ENCODE measurements at regions of chr11 and their contacts with region 1.

Region 1: DNA sequence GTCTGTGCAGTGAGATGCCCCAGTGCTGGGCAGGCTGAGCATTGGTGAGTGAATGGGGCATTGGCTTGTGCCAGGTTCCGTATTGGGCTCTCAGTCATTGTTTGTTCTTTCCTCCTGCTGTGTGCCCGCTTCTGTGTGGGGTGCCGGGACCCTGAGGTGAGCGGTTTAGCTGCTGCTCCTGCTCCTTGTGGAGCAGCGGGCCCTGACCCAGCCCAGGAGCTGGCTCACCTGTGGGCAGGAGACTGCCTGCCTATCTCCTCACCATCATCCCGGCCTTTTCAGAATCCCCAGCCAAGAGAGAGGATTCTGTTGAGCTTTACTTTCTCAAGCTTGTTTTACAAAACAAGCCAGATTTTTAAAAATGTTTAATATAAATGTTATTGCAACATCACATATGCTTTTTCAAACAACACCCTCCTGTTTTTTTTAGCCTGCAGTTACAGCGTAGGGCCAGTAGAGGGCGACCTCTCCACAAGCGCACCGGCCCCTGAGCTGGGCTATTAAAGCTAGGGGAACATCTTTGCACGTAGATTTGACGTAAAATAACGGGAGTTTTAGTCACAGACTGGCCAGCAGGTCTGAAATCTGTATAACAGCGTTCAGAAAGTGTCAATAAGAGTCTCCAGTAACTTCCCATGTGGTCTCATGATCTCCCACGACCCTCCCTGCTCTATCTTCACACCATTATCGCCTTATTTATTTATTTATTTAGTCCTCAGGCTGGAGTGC is 25.1 kb upstream of the RELT start:
- DNase-seq: peak; percentile 55 to 88
- ATAC-seq: peak; percentile 94 to 98 (median 95)
- H3K4me3 ChIP-seq: no peak overlapping the region
- H3K4me3 Mint-ChIP-seq: no peak overlapping the region
- H3K27ac ChIP-seq: no peak overlapping the region
- H3K27ac Mint-ChIP-seq: peak overlapping the region; percentile 53 to 54
- H3K4me1 ChIP-seq: no peaks in the 10 kb centered on the region
- H3K4me1 Mint-ChIP-seq: peaks cover 0 to 5% of the 10 kb centered on the region in 2 donors
- H3K27me3 ChIP-seq: no peaks in the 10 kb centered on the region
- H3K27me3 Mint-ChIP-seq: peaks cover 0 to 3% of the 10 kb centered on the region in 2 donors
- CTCF ChIP-seq: peak; percentile 98

Region 2: DNA sequence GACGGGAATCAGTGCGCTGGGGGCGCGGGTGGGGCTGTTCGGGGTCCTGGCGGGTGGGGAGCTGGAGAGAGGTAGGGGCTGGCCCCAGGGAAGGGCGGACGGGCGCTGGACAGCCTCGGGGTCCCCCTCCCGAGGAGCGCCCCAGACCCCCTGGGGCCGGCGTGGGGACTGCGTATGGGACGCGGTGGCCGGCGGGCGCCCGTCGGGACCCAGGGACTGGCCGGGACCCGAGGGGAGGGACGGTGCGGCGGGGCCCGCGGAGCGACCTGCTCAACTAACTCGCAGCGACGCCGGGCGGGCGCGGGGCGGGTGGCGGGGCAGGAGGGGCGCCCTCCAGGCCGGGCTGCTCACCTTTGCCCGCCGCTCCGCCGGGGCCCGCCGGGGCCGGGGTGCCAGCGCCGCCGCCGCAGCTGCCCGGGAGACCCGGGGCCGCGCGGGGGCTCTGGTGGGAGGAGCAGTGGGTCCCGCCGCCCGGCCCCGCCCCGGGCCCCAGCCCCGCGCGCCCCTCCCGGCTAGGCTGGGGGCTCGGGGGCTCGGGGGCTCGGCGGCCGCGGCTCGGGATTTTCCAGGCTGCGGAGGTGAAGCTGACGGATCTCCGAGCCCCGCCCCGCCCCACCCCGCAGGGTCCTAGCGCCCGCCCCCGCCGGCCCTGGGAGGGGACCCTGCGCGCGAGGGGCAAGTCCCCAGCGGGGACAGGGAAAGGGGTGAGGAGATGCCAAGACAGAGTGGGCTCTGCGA is 569.6 kb before region 1 on chr11:
- intact Hi-C with region 1: no loop called
- DNase-seq: peak; percentile 53 to 83
- ATAC-seq: peak; percentile 83 to 88 (median 84)
- H3K4me3 ChIP-seq: peak overlapping the region; percentile 20
- H3K4me3 Mint-ChIP-seq: peak overlapping the region; percentile 83
- H3K27ac ChIP-seq: no peak overlapping the region
- H3K27ac Mint-ChIP-seq: peak overlapping the region in 1 of 2 donors; percentile 83
- H3K4me1 ChIP-seq: peaks cover 45% of the 10 kb centered on the region
- H3K4me1 Mint-ChIP-seq: peaks cover 26 to 27% of the 10 kb centered on the region in 2 donors
- H3K27me3 ChIP-seq: no peaks in the 10 kb centered on the region
- H3K27me3 Mint-ChIP-seq: peaks cover 0 to 7% of the 10 kb centered on the region in 2 donors
- CTCF ChIP-seq: no peak

Region 3: DNA sequence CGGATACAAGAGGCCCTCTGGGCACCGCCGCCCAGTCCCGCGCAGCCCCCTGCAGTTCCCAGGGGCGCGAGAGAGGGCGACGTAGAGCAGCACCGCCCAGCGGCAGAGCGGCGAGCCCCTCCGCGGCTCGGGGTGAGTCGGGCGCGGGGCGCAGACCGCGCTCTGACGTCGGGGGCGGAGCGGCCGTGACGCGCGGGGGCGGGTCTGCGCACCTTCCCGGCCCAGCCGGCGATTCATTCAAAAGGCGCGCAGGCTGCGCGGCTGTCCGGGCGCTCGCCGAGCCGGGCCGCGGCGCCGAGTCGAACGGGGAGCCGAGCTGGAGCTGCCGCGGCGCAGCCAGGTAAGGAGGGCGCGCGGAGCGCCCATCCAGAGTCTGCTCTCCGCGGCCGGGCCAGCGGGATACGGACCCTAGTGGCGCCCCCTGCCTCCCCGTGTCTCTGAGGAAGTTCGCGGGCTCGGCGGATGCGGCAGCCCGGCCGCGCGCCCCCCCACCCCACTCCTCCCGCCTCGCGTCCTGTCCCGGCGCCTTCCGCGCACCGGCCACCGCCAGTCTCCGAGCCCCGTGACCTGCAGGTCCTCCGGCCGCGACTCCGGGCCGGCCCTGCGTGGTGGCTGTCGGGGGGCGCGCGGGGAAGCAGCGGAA is 25.2 kb after region 1 on chr11 and contains the start of gene RELT:
- intact Hi-C with region 1: loop called (anchors 2 kb)
- DNase-seq: peak; percentile 96 to 97
- ATAC-seq: peak; percentile 76 to 90 (median 76)
- H3K4me3 ChIP-seq: peak within 1 kb of the TSS; percentile 69
- H3K4me3 Mint-ChIP-seq: peak within 1 kb of the TSS; percentile 91
- H3K27ac ChIP-seq: peak within 1 kb of the TSS; percentile 89
- H3K27ac Mint-ChIP-seq: peak within 1 kb of the TSS; percentile 91 to 95
- H3K4me1 ChIP-seq: peaks cover 61% of the 10 kb centered on the region
- H3K4me1 Mint-ChIP-seq: peaks cover 14 to 45% of the 10 kb centered on the region in 2 donors
- H3K27me3 ChIP-seq: no peaks in the 10 kb centered on the region
- H3K27me3 Mint-ChIP-seq: no peaks in the 10 kb centered on the region
- CTCF ChIP-seq: peak; percentile 94
- total RNA-seq, gene RELT: 132 to 264 (median 151) TPM

Region 4: DNA sequence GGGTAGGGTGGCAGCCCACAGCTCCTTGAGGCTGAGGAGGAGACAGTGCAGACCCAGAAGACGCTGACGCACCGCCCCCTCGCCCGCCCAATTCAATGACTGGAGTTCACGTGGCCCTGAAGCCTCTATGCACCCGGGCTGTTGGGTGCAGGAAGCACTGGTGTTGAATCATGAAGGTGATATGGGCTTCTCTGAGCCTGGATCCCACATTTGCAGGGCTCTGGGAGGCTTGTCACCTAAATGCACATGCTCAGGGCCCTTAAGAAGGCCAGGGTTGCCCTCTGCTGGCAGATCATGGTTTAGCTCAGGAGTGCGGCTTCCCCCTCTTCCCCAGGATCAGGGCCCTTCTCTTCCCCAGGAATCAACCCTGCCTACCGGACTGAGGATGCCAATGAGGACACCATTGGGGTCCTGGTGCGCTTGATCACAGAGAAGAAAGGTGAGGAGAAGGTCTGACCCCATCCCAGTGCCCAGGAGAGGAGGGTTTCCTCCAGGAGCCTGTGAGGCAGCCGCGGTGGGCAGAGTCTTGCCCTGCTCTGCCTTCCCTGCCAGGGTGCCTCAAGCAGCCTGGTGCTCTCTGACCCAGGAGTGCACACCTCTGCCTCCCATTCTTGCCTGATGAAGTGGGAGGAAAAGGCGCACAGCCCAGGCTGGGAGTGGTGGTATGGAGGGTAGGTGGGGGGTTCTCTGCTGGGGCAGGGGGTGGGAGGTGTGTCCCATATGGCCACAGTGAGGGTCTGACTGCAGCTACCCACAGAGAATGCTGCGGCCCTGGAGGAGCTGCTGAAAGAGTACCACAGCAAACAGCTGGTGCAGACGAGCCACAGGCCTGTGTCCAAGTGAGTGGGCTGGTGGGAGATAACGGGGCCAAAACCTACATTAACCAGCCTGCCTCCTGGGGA is 42.7 kb after region 1 on chr11:
- intact Hi-C with region 1: loop called (anchors 1 kb)
- DNase-seq: peak; percentile 64 to 82
- ATAC-seq: peak; percentile 46 to 71 (median 55)
- H3K4me3 ChIP-seq: no peak overlapping the region
- H3K4me3 Mint-ChIP-seq: no peak overlapping the region
- H3K27ac ChIP-seq: no peak overlapping the region
- H3K27ac Mint-ChIP-seq: peak overlapping the region; percentile 60 to 70
- H3K4me1 ChIP-seq: peaks cover 15% of the 10 kb centered on the region
- H3K4me1 Mint-ChIP-seq: peaks cover 15 to 27% of the 10 kb centered on the region in 2 donors
- H3K27me3 ChIP-seq: no peaks in the 10 kb centered on the region
- H3K27me3 Mint-ChIP-seq: no peaks in the 10 kb centered on the region
- CTCF ChIP-seq: peak; percentile 66

Region 5: GRCh38 chr11:73661035-73661628 is 310.1 kb after region 1 on chr11:
- intact Hi-C with region 1: loop called (anchors 1 kb)
- DNase-seq: peak; percentile 81 to 90
- ATAC-seq: peak; percentile 89 to 97 (median 97)
- H3K4me3 ChIP-seq: peak overlapping the region; percentile 4
- H3K4me3 Mint-ChIP-seq: peak overlapping the region; percentile 55
- H3K27ac ChIP-seq: no peak overlapping the region
- H3K27ac Mint-ChIP-seq: no peak overlapping the region
- H3K4me1 ChIP-seq: peaks cover 12% of the 10 kb centered on the region
- H3K4me1 Mint-ChIP-seq: peaks cover 0 to 7% of the 10 kb centered on the region in 2 donors
- H3K27me3 ChIP-seq: peaks cover 7% of the 10 kb centered on the region
- H3K27me3 Mint-ChIP-seq: no peaks in the 10 kb centered on the region
- CTCF ChIP-seq: peak; percentile 88

Measured in natural killer cell (primary cell).